Activated CD4-positive, alpha-beta T cell treated with anti-CD3 and anti-CD28 coated beads for 36 hours (primary cell): ENCODE measurements at regions of chr7 and their contacts with region 1.

Region 1: DNA sequence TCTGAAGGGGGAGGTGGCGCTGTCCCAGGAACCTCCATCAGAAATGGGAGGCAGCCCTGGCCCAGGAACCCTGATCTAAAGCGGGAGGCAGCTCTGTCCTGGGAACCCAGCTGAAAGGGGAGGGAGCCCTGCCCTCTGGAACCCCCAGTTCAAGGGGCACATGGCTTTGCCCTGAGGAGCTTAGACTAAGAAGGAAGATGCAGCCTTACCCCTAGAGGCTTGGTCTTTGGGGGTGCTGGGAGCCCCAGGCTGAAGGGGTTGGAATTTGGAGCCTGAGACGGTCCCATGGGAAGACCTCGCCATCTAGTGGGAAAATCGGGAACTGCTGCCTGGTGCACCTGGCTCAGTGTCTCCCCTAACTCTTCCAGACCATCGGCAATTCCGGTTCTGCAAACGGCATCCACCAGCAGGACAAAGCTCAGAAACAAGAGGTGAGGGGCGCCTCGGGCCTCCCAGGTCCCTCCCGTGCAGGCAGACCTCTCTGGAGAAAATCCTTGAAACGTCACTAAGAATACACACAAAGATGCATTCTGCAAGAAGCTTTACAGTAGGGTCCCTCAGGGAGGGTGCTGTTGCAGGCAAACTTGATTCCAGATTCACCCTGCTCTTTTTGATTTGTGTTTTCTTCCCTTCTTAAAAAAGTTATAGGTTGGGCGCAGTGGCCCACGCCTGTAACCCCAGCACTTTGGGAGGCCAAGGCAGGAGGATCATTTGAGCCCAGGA is 52.4 kb upstream of the GTF2IRD1 start:
- DNase-seq: peak; percentile 84
- ATAC-seq: peak; percentile 73
- H3K4me3 Mint-ChIP-seq: no peak overlapping the region
- H3K27ac Mint-ChIP-seq: no peak overlapping the region
- H3K4me1 Mint-ChIP-seq: no peaks in the 10 kb centered on the region
- H3K27me3 Mint-ChIP-seq: no peaks in the 10 kb centered on the region

Region 2: GRCh38 chr7:74068393-74069085 is 332.8 kb before region 1 on chr7:
- CTCF ChIA-PET with region 1: interaction called, 11 read pairs
- POLR2A ChIA-PET with region 1: no interaction called
- intact Hi-C with region 1: loop called (anchors 1 to 2 kb)
- DNase-seq: no peak
- ATAC-seq: no peak
- H3K4me3 Mint-ChIP-seq: no peak overlapping the region
- H3K27ac Mint-ChIP-seq: no peak overlapping the region
- H3K4me1 Mint-ChIP-seq: no peaks in the 10 kb centered on the region
- H3K27me3 Mint-ChIP-seq: no peaks in the 10 kb centered on the region

Region 3: GRCh38 chr7:74206589-74207120 is 194.6 kb before region 1 on chr7:
- CTCF ChIA-PET with region 1: interaction called, 90 read pairs
- POLR2A ChIA-PET with region 1: no interaction called
- intact Hi-C with region 1: loop called (anchors 1 kb)
- DNase-seq: peak; percentile 88
- ATAC-seq: peak; percentile 72
- H3K4me3 Mint-ChIP-seq: no peak overlapping the region
- H3K27ac Mint-ChIP-seq: no peak overlapping the region
- H3K4me1 Mint-ChIP-seq: peaks cover 10% of the 10 kb centered on the region
- H3K27me3 Mint-ChIP-seq: peaks cover 9% of the 10 kb centered on the region

Region 4: DNA sequence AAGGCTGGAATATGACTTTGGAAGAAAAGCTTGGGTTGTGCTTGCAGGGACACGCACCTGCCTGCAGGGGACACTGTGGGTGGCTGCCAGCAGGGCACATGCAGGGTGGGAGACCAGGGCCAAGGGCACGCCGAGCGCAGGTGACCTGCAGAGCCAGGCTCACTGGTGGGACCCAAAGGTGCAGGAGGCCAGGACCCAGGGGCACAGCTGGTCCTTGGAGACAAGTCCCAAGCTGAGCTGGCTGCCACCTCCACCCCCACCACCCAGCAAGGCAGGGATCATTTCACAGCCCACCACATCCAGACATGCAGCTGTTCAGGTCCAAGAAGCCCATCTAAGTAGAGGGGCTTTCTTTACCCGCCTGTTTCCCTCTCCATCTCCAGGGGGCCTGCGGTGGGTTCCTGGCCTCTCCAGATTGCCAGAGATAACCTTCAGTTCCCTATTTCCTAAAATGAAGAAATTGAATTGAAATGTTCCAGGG is 125.9 kb before region 1 on chr7:
- CTCF ChIA-PET with region 1: interaction called, 7 read pairs
- POLR2A ChIA-PET with region 1: no interaction called
- intact Hi-C with region 1: loop called (anchors 1 to 5 kb)
- DNase-seq: peak; percentile 34
- ATAC-seq: no peak
- H3K4me3 Mint-ChIP-seq: no peak overlapping the region
- H3K27ac Mint-ChIP-seq: no peak overlapping the region
- H3K4me1 Mint-ChIP-seq: peaks cover 10% of the 10 kb centered on the region
- H3K27me3 Mint-ChIP-seq: no peaks in the 10 kb centered on the region

Region 5: GRCh38 chr7:74429153-74429747 is 28.0 kb after region 1 on chr7:
- CTCF ChIA-PET with region 1: interaction called, 15 read pairs
- POLR2A ChIA-PET with region 1: no interaction called
- intact Hi-C with region 1: no loop called
- DNase-seq: no peak
- ATAC-seq: no peak
- H3K4me3 Mint-ChIP-seq: no peak overlapping the region
- H3K27ac Mint-ChIP-seq: no peak overlapping the region
- H3K4me1 Mint-ChIP-seq: no peaks in the 10 kb centered on the region
- H3K27me3 Mint-ChIP-seq: no peaks in the 10 kb centered on the region

Region 6: DNA sequence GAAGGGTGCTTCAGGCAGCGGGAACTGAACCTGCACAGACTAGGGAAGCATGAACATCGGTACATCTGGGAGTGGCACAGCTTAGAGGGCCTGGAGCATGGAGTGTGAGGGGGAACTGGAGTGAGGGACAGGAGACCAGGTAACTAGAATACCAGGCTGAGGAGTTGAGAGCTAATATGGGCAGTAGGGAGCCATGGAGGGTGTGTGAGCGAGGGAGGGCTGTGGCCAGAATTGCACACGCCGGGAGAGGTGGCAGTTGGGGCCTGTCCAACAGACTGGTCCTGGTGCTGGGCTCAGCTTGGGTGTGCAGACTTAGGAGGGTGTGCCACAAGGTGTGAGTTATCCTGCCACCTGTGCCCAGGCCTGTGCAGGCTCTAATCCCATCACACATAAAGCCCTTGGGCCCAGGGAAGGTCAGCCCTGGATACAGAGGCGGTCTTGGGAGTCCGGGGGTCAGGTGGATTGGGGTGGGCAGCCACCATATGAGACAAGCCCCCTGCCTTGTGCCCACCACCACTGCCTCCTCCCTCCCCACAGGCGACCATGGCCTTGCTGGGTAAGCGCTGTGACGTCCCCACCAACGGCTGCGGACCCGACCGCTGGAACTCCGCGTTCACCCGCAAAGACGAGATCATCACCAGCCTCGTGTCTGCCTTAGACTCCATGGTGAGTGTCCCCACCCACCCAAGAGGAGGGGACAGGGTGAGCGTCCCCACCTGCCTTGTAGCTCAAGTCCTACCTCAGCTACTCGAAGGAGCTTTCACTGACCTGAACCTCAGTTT is 106.4 kb after region 1 on chr7:
- CTCF ChIA-PET with region 1: no interaction called
- POLR2A ChIA-PET with region 1: interaction called, 10 read pairs
- intact Hi-C with region 1: no loop called
- DNase-seq: no peak
- ATAC-seq: no peak
- H3K4me3 Mint-ChIP-seq: no peak overlapping the region
- H3K27ac Mint-ChIP-seq: no peak overlapping the region
- H3K4me1 Mint-ChIP-seq: no peaks in the 10 kb centered on the region
- H3K27me3 Mint-ChIP-seq: no peaks in the 10 kb centered on the region